Activated CD4-positive, alpha-beta memory T cell treated with anti-CD3 and anti-CD28 coated beads for 36 hours (primary cell): ENCODE measurements at regions of chr4 and their contacts with region 1.

Region 1: GRCh38 chr4:88523325-88524129 is at the start of gene PYURF:
- DNase-seq: peak; percentile 89
- H3K4me3 Mint-ChIP-seq: peak within 1 kb of the TSS; percentile 90
- H3K27ac Mint-ChIP-seq: peak within 1 kb of the TSS; percentile 88
- H3K4me1 Mint-ChIP-seq: peaks cover 47% of the 10 kb centered on the region
- H3K27me3 Mint-ChIP-seq: no peaks in the 10 kb centered on the region
- total RNA-seq, gene PYURF: 49.0 to 51.7 TPM

Region 2: DNA sequence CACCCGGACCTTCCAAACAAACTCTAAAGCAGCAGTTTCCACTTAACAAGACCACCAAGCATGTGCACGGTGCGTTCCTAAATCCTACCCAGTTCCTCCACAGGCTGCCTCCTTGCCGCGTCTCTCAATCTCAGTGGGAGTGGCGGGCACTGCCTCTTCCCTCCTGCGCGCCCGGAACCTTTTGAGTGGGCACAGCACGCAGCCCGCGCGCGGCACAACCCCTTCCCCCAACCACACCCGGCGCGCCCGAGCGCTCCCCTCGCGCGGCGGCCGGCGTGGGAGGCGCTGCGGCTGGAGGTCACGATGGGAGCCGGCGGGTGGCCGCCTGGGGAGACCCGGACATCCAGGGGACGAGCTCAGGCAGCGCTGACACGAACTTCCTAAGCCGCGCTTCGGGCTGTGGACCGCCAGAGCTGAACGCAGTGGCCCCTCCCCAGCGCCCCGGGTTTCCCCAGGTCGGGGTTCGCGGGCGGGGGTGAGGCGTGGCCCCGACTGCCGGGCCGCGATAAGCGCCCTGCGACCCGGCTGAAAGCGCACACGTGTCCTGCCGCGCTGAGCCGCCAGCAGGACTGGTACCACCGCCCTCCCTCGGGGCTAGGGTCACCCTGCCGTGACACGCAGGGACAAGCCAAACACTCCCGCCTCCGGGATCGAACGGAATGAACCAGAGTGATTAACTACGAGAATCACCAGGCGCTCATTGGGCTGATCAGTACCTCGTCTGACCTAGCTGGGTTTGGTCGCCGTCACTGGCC is 364.9 kb before region 1 on chr4 and contains the start of gene ABCG2:
- CTCF ChIA-PET with region 1: no interaction called
- POLR2A ChIA-PET with region 1: no interaction called
- intact Hi-C with region 1: loop called (anchors 2 kb)
- DNase-seq: peak; percentile 53
- H3K4me3 Mint-ChIP-seq: peak within 1 kb of the TSS; percentile 71
- H3K27ac Mint-ChIP-seq: peak within 1 kb of the TSS; percentile 55
- H3K4me1 Mint-ChIP-seq: peaks cover 14% of the 10 kb centered on the region
- H3K27me3 Mint-ChIP-seq: peaks cover 6% of the 10 kb centered on the region
- total RNA-seq, gene ABCG2: 0.75 to 0.81 TPM

Region 3: GRCh38 chr4:88456757-88457306 is 66.7 kb before region 1 on chr4 and contains the start of gene HERC5:
- CTCF ChIA-PET with region 1: no interaction called
- POLR2A ChIA-PET with region 1: interaction called, 4 read pairs
- intact Hi-C with region 1: loop called (anchors 1 kb)
- DNase-seq: peak; percentile 94
- H3K4me3 Mint-ChIP-seq: peak within 1 kb of the TSS; percentile 100
- H3K27ac Mint-ChIP-seq: peak within 1 kb of the TSS; percentile 97
- H3K4me1 Mint-ChIP-seq: peaks cover 12% of the 10 kb centered on the region
- H3K27me3 Mint-ChIP-seq: peaks cover 3% of the 10 kb centered on the region
- total RNA-seq, gene HERC5: 32.3 to 34.0 TPM

Region 4: GRCh38 chr4:88591787-88592599 is 68.5 kb after region 1 on chr4 and contains the start of gene HERC3:
- CTCF ChIA-PET with region 1: interaction called, 3 read pairs
- POLR2A ChIA-PET with region 1: no interaction called
- intact Hi-C with region 1: loop called (anchors 2 kb)
- DNase-seq: peak; percentile 92
- H3K4me3 Mint-ChIP-seq: peak within 1 kb of the TSS; percentile 95
- H3K27ac Mint-ChIP-seq: peak within 1 kb of the TSS; percentile 85
- H3K4me1 Mint-ChIP-seq: peaks cover 41% of the 10 kb centered on the region
- H3K27me3 Mint-ChIP-seq: peaks cover 4% of the 10 kb centered on the region
- total RNA-seq, gene HERC3: 29.0 to 30.2 TPM

Region 5: DNA sequence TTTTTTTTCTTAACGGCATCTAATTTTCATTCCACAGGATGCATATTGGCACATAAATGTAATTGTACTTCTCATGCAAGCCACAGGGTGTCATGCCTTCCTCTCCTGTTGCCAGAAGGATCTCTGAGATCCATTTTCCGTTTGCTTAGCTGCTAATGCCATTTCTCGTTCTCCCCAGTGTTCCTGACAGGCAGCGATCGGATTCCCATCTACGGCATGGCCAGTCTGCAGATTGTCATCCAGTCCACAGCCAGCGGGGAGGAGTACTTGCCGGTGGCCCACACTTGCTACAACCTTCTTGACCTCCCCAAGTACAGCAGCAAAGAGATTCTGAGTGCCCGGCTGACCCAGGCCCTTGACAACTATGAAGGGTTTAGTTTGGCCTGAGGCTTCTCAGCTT is 183.0 kb after region 1 on chr4:
- CTCF ChIA-PET with region 1: no interaction called
- POLR2A ChIA-PET with region 1: no interaction called
- intact Hi-C with region 1: loop called (anchors 5 kb)
- DNase-seq: no peak
- H3K4me3 Mint-ChIP-seq: no peak overlapping the region
- H3K27ac Mint-ChIP-seq: no peak overlapping the region
- H3K4me1 Mint-ChIP-seq: peaks cover 14% of the 10 kb centered on the region
- H3K27me3 Mint-ChIP-seq: no peaks in the 10 kb centered on the region

Region 6: GRCh38 chr4:88823058-88823919 is 299.8 kb after region 1 on chr4:
- CTCF ChIA-PET with region 1: no interaction called
- POLR2A ChIA-PET with region 1: no interaction called
- intact Hi-C with region 1: loop called (anchors 2 kb)
- DNase-seq: peak; percentile 79
- H3K4me3 Mint-ChIP-seq: peak overlapping the region; percentile 87
- H3K27ac Mint-ChIP-seq: peak overlapping the region; percentile 84
- H3K4me1 Mint-ChIP-seq: peaks cover 37% of the 10 kb centered on the region
- H3K27me3 Mint-ChIP-seq: no peaks in the 10 kb centered on the region

Region 7: DNA sequence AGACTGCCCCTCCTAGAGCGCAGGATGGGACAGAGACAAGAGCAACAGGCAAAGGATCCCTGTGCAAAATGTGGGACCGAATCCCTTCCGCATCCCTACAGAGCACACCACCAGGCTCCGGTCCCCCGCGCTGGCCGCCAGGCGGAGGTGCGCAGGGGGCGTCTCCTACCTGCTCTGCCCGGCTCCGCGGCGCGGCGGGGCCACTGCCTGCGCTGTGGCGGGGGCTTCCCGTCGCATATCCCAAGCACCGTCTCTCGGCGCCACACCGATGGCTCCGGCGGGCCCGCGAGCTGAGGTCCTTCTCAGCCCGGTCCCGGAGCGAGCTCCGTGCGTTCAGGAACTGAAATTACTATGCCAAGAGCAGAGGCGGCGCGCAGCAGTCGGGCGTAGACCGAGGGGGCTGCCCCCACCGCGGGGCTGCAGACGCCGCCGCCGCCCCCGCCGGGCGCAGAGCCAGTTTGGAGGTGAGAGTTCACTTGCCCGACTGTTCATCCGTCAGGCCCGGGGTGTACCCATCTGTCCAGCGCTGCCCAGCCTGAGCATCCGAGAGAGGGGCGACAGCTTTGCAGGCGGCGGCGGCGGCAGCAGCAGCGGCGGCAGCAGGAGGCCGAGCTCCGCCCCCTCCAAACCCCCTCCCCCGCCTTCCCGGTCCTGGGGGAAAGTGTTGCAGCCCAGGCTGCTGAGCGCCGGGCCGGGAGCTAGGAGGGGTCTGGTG is 784.1 kb after region 1 on chr4 and contains the start of gene GPRIN3:
- CTCF ChIA-PET with region 1: no interaction called
- POLR2A ChIA-PET with region 1: no interaction called
- intact Hi-C with region 1: loop called (anchors 10 kb)
- DNase-seq: peak; percentile 81
- H3K4me3 Mint-ChIP-seq: peak within 1 kb of the TSS; percentile 89
- H3K27ac Mint-ChIP-seq: peak within 1 kb of the TSS; percentile 83
- H3K4me1 Mint-ChIP-seq: peaks cover 62% of the 10 kb centered on the region
- H3K27me3 Mint-ChIP-seq: no peaks in the 10 kb centered on the region
- total RNA-seq, gene GPRIN3: 20.0 to 22.7 TPM